ENCODE measurements at regions of chr10 and their contacts with region 1.

Region 1: GRCh38 chr10:114513381-114513792 is 109.1 kb upstream of the AFAP1L2 start:
- DNase-seq: no peak

Region 2: GRCh38 chr10:113939212-113939860 is 574.1 kb before region 1 on chr10:
- intact Hi-C with region 1: loop called in 1 of 2 experiments (anchors 5 kb)
- DNase-seq: no peak

Region 3: GRCh38 chr10:114166084-114166483 is 347.3 kb before region 1 on chr10:
- intact Hi-C with region 1: no loop called
- DNase-seq: no peak